Aorta (tissue), 5 donors: ENCODE measurements at regions of chr9 and their contacts with region 1.

Region 1: GRCh38 chr9:136093995-136094881 is 851 bp downstream of the NACC2 start:
- DNase-seq: peak; percentile 89 to 95
- ATAC-seq: peak; percentile 69
- H3K4me3 ChIP-seq: peak overlapping the region; percentile 86 to 93
- H3K27ac ChIP-seq: peak overlapping the region; percentile 60 to 86
- H3K4me1 ChIP-seq: peaks cover 0 to 2% of the 10 kb centered on the region in 2 donors
- H3K27me3 ChIP-seq: no peaks in the 10 kb centered on the region

Region 2: DNA sequence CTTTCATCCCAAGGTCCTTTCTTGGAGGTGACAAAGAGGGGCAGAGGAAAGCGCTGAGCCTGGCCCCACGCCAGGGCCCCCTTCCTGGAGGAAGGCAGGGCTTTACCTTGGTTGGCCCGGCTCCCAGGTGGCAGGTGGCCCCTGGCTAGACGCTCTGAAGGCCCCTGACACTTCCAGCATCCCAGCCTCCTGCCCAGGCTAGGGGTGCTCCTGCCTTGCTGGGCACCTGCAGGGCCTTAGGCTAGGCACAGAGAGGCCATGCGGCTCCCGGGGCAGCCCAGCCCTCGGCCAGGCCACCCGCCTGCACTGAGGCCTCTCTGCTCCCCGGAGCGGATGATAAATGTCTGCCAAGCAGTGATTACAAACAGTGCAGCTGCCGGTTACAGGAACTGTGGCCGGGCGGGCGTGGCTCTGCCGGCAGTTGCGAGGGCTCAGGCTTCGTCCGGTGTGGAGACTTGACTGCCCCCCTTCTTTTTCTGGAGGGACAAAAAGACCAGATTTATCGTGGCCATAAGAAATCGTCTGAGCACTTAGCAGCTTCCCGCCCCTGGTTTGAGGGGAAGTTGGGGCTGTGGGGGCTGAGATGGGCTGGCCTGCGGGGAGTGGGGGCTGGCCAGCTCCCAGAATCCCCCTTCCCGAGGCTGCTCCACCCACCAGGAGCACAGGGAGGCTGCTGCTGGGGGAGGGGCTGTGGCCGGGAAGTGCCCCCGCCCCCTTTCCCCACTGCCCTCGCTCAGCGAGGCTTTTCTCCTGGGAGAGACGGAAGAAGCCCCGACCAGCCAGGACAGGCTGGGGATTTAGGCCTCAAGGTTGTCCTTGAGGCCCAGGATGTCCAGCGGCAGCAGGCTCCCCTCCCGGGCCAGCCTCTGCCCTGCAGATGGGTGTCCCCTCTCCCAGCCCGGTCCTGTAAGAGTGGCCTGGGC is 101.5 kb before region 1 on chr9:
- intact Hi-C with region 1: loop called in 1 of 2 experiments (anchors 2 kb)
- DNase-seq: peak; percentile 91 to 92
- ATAC-seq: peak; percentile 84
- H3K4me3 ChIP-seq: no peak overlapping the region
- H3K27ac ChIP-seq: no peak overlapping the region
- H3K4me1 ChIP-seq: no peaks in the 10 kb centered on the region
- H3K27me3 ChIP-seq: no peaks in the 10 kb centered on the region

Region 3: GRCh38 chr9:136051517-136052432 is 42.5 kb before region 1 on chr9:
- intact Hi-C with region 1: loop called in 1 of 2 experiments (anchors 2 kb)
- DNase-seq: peak; percentile 84 to 92
- ATAC-seq: peak; percentile 76
- H3K4me3 ChIP-seq: peak overlapping the region; percentile 14 to 24
- H3K27ac ChIP-seq: peak overlapping the region in 1 of 2 donors; percentile 22
- H3K4me1 ChIP-seq: peaks cover 0 to 2% of the 10 kb centered on the region in 2 donors
- H3K27me3 ChIP-seq: no peaks in the 10 kb centered on the region

Region 4: GRCh38 chr9:136109351-136110081 is 15.3 kb after region 1 on chr9:
- intact Hi-C with region 1: loop called in 1 of 2 experiments (anchors 1 kb)
- DNase-seq: peak; percentile 96 to 97
- ATAC-seq: peak; percentile 92
- H3K4me3 ChIP-seq: no peak overlapping the region
- H3K27ac ChIP-seq: peak overlapping the region in 1 of 2 donors; percentile 34
- H3K4me1 ChIP-seq: no peaks in the 10 kb centered on the region
- H3K27me3 ChIP-seq: no peaks in the 10 kb centered on the region